ENCODE measurements at regions of chr12 and their contacts with region 1.

Region 1: DNA sequence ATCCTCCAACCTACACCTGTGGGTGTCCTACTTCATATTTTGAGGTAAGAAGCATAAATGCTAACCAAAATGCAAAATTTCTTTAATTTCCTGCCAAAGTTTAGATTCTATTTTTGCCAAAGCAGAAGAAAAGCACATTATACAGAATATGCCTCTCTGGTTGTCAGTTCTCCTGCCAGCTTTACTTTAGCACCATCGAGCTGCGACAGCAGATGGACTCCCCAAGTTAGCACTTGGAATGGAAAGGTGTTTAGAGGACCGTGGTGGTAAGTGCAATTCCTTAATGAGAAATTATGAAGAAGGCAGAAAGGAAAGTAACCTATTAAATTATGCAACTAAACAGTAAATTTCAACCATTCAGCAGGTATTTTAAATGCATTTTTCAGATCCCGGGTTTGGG is 326.6 kb downstream of the RERGL start:
- DNase-seq: no peak
- ATAC-seq: no peak
- H3K4me3 Mint-ChIP-seq: no peak overlapping the region
- H3K27ac Mint-ChIP-seq: no peak overlapping the region
- H3K4me1 Mint-ChIP-seq: no peaks in the 10 kb centered on the region
- H3K27me3 Mint-ChIP-seq: no peaks in the 10 kb centered on the region

Region 2: DNA sequence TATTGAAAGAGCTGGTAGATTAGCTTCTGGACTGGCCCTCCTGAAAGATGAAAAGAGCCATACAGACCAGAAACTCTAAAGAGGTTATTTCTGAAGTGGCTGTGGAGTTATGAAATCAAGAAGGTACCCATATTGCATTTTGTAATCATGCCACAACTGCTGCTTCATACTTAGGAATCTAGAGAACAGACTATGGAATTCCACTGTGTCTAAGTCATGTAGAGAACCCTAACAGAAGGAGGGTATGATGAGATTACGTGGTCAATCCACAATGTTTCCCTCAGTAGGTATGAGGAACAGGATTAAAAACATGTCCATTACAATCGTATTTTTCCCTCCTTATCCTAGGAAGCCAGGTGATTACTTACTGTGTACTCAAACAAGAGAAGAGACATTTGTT is 382.2 kb before region 1 on chr12:
- CTCF ChIA-PET with region 1: no interaction called
- POLR2A ChIA-PET with region 1: no interaction called
- intact Hi-C with region 1: no loop called
- DNase-seq: no peak
- ATAC-seq: no peak
- H3K4me3 Mint-ChIP-seq: no peak overlapping the region
- H3K27ac Mint-ChIP-seq: no peak overlapping the region
- H3K4me1 Mint-ChIP-seq: no peaks in the 10 kb centered on the region
- H3K27me3 Mint-ChIP-seq: no peaks in the 10 kb centered on the region

Region 3: GRCh38 chr12:17853054-17853453 is 89.7 kb after region 1 on chr12:
- CTCF ChIA-PET with region 1: no interaction called
- POLR2A ChIA-PET with region 1: no interaction called
- intact Hi-C with region 1: loop called (anchors 2 to 5 kb)
- DNase-seq: no peak
- ATAC-seq: no peak
- H3K4me3 Mint-ChIP-seq: no peak overlapping the region
- H3K27ac Mint-ChIP-seq: no peak overlapping the region
- H3K4me1 Mint-ChIP-seq: no peaks in the 10 kb centered on the region
- H3K27me3 Mint-ChIP-seq: no peaks in the 10 kb centered on the region

Region 4: GRCh38 chr12:18629916-18630315 is 866.5 kb after region 1 on chr12:
- CTCF ChIA-PET with region 1: no interaction called
- POLR2A ChIA-PET with region 1: no interaction called
- intact Hi-C with region 1: no loop called
- DNase-seq: no peak
- ATAC-seq: no peak
- H3K4me3 Mint-ChIP-seq: no peak overlapping the region
- H3K27ac Mint-ChIP-seq: no peak overlapping the region
- H3K4me1 Mint-ChIP-seq: no peaks in the 10 kb centered on the region
- H3K27me3 Mint-ChIP-seq: no peaks in the 10 kb centered on the region